Activated CD4-positive, alpha-beta T cell treated with anti-CD3 and anti-CD28 coated beads, Interleukin-2, amount 10 ng/mL, durations not matched to agents 24 days and 14 days (primary cell): ENCODE measurements at regions of chr1 and their contacts with region 1.

Region 1: GRCh38 chr1:41862384-41863174 is 56.1 kb downstream of the HIVEP3 start:
- DNase-seq: peak; percentile 85
- H3K4me3 Mint-ChIP-seq: peak overlapping the region; percentile 53
- H3K27ac Mint-ChIP-seq: peak overlapping the region; percentile 91
- H3K4me1 Mint-ChIP-seq: peaks cover 42% of the 10 kb centered on the region
- H3K27me3 Mint-ChIP-seq: no peaks in the 10 kb centered on the region

Region 2: GRCh38 chr1:41662061-41662764 is 200.4 kb before region 1 on chr1:
- intact Hi-C with region 1: loop called (anchors 2 kb)
- DNase-seq: peak; percentile 93
- H3K4me3 Mint-ChIP-seq: peak overlapping the region; percentile 71
- H3K27ac Mint-ChIP-seq: peak overlapping the region; percentile 74
- H3K4me1 Mint-ChIP-seq: peaks cover 66% of the 10 kb centered on the region
- H3K27me3 Mint-ChIP-seq: no peaks in the 10 kb centered on the region

Region 3: GRCh38 chr1:41791667-41792484 is 70.7 kb before region 1 on chr1:
- intact Hi-C with region 1: loop called (anchors 2 kb)
- DNase-seq: peak; percentile 74
- H3K4me3 Mint-ChIP-seq: peak overlapping the region; percentile 64
- H3K27ac Mint-ChIP-seq: peak overlapping the region; percentile 75
- H3K4me1 Mint-ChIP-seq: peaks cover 51% of the 10 kb centered on the region
- H3K27me3 Mint-ChIP-seq: no peaks in the 10 kb centered on the region

Region 4: GRCh38 chr1:41850029-41850428 is 12.6 kb before region 1 on chr1:
- intact Hi-C with region 1: loop called (anchors 1 kb)
- DNase-seq: peak; percentile 74
- H3K4me3 Mint-ChIP-seq: no peak overlapping the region
- H3K27ac Mint-ChIP-seq: no peak overlapping the region
- H3K4me1 Mint-ChIP-seq: peaks cover 44% of the 10 kb centered on the region
- H3K27me3 Mint-ChIP-seq: no peaks in the 10 kb centered on the region

Region 5: GRCh38 chr1:41919764-41920397 is 57.3 kb after region 1 on chr1:
- intact Hi-C with region 1: loop called (anchors 2 kb)
- DNase-seq: peak; percentile 95
- H3K4me3 Mint-ChIP-seq: peak overlapping the region; percentile 95
- H3K27ac Mint-ChIP-seq: peak overlapping the region; percentile 96
- H3K4me1 Mint-ChIP-seq: peaks cover 51% of the 10 kb centered on the region
- H3K27me3 Mint-ChIP-seq: peaks cover 5% of the 10 kb centered on the region

Region 6: GRCh38 chr1:42146626-42147320 is 284.2 kb after region 1 on chr1:
- intact Hi-C with region 1: no loop called
- DNase-seq: peak; percentile 91
- H3K4me3 Mint-ChIP-seq: no peak overlapping the region
- H3K27ac Mint-ChIP-seq: no peak overlapping the region
- H3K4me1 Mint-ChIP-seq: peaks cover 5% of the 10 kb centered on the region
- H3K27me3 Mint-ChIP-seq: peaks cover 4% of the 10 kb centered on the region